ENCODE measurements at regions of chr1 and their contacts with region 1.

Region 1: DNA sequence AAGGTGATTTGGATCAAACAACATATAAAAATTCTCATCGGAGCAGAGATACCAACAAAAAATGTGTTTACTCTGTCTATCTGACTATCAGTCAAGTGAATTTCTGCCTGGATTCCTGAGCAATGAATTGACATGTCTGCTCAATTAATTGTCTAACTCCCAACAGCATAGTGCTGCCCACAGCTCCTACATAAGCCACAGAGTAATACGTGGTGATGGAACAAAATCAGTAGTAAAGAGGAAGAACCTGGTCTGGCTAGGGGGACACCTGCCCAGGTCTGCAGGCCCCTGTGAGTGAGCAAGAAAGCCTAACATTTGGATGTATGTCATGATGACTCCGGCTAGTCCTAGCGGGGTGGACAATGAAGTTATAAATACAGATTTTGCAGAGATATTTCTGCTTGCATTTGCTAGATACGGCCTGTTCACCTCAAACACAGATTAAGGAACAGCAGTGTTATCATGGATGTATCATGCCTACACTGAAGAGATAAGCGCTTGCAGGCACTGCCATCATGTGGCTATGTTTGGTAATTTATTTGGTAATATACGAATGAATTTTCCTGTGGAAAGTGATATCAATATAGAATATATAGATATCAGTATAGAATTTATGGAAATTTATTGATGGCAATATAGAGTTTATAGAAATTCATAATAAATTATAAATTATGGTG is 69.6 kb upstream of the LRRC8B start:
- DNase-seq: peak; percentile 67 to 73 (median 69)
- H3K4me3 ChIP-seq: no peak overlapping the region
- H3K4me3 Mint-ChIP-seq: no peak overlapping the region
- H3K27ac ChIP-seq: no peak overlapping the region
- H3K27ac Mint-ChIP-seq: peak overlapping the region in 2 of 7 donors; percentile 48 to 68
- H3K4me1 ChIP-seq: peaks cover 11% of the 10 kb centered on the region
- H3K4me1 Mint-ChIP-seq: peaks cover 9 to 14% (median 12%) of the 10 kb centered on the region in 4 donors
- H3K27me3 ChIP-seq: no peaks in the 10 kb centered on the region
- H3K27me3 Mint-ChIP-seq: peaks cover 1 to 2% of the 10 kb centered on the region in 2 donors

Region 2: GRCh38 chr1:88935522-88936222 is 519.3 kb before region 1 on chr1:
- CTCF ChIA-PET with region 1: interaction called, 6 read pairs
- POLR2A ChIA-PET with region 1: no interaction called
- intact Hi-C with region 1: loop called (anchors 1 kb)
- DNase-seq: peak in 4 of 5 donors; percentile 24 to 39 (median 34)
- H3K4me3 ChIP-seq: no peak overlapping the region
- H3K4me3 Mint-ChIP-seq: no peak overlapping the region
- H3K27ac ChIP-seq: no peak overlapping the region
- H3K27ac Mint-ChIP-seq: peak overlapping the region in 2 of 7 donors; percentile 2 to 27
- H3K4me1 ChIP-seq: no peaks in the 10 kb centered on the region
- H3K4me1 Mint-ChIP-seq: peaks cover 1 to 13% (median 5%) of the 10 kb centered on the region in 4 donors
- H3K27me3 ChIP-seq: no peaks in the 10 kb centered on the region
- H3K27me3 Mint-ChIP-seq: no peaks in the 10 kb centered on the region

Region 3: GRCh38 chr1:88973520-88974137 is 481.4 kb before region 1 on chr1:
- CTCF ChIA-PET with region 1: interaction called, 51 read pairs
- POLR2A ChIA-PET with region 1: no interaction called
- intact Hi-C with region 1: loop called (anchors 1 kb)
- DNase-seq: peak in 4 of 5 donors; percentile 25 to 39 (median 33)
- H3K4me3 ChIP-seq: no peak overlapping the region
- H3K4me3 Mint-ChIP-seq: peak overlapping the region in 1 of 8 donors; percentile 0
- H3K27ac ChIP-seq: no peak overlapping the region
- H3K27ac Mint-ChIP-seq: peak overlapping the region in 3 of 7 donors; percentile 2 to 74 (median 26)
- H3K4me1 ChIP-seq: peaks cover 8% of the 10 kb centered on the region
- H3K4me1 Mint-ChIP-seq: peaks cover 15 to 23% (median 15%) of the 10 kb centered on the region in 4 donors
- H3K27me3 ChIP-seq: no peaks in the 10 kb centered on the region
- H3K27me3 Mint-ChIP-seq: no peaks in the 10 kb centered on the region

Region 4: DNA sequence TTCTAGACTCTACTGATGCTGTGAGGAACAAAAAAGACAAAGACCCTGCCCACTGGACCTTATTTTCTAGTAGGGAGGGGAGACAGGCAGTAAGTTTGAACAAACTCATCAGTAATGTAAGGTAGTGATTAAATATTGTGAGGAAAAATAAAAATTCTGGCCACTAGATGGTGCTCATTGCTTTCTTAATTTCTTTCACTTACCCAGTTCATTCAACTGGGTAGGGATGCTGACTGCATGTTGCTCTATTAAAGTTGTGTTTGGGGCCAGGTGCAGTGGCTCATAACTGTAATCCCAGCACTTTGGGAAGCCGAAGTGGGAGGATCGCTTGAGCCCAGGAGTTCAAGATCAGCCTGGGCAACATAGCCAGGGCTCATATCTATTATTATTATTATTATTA is 456.3 kb before region 1 on chr1:
- CTCF ChIA-PET with region 1: interaction called, 70 read pairs
- POLR2A ChIA-PET with region 1: no interaction called
- intact Hi-C with region 1: loop called (anchors 1 kb)
- DNase-seq: peak; percentile 51 to 74 (median 71)
- H3K4me3 ChIP-seq: no peak overlapping the region
- H3K4me3 Mint-ChIP-seq: no peak overlapping the region
- H3K27ac ChIP-seq: no peak overlapping the region
- H3K27ac Mint-ChIP-seq: no peak overlapping the region
- H3K4me1 ChIP-seq: peaks cover 25% of the 10 kb centered on the region
- H3K4me1 Mint-ChIP-seq: peaks cover 20 to 40% (median 30%) of the 10 kb centered on the region in 4 donors
- H3K27me3 ChIP-seq: no peaks in the 10 kb centered on the region
- H3K27me3 Mint-ChIP-seq: no peaks in the 10 kb centered on the region

Region 5: DNA sequence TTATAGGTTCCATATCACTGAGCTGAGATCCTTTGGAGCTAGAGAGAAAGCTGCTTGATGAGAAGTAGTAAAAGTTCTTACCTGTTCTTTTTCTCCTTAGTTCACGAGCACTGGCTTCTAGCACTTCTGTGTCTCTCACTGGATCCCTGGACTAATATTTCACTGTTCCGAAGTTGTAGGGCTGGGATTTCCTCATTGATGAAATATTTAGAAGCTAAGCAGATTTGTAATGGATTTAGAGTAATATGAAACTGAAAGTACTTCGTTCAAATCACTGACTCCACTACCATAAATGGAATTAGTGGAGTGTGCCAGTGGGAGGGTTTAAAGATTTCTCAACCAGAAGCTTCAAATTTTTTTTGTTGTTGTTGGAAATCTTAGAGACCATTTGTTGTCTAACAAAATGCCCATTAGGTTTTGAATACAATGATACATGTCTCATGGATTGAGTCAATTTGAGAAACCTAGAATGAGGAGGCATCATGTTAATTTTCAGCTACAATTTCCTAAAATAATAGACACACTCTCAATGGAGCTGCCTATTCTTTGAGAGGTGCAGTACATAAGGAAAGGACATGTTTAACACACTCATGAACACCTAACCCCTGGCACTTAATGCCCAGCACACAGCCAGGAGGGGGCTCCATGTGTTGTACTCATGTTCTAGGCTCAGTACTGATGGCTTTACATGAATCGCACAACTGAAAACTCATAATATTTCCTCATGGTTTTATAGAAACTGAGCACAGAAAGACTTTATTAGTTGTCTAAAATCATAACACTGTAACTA is 389.7 kb before region 1 on chr1 and contains the start of gene GBP1:
- CTCF ChIA-PET with region 1: no interaction called
- POLR2A ChIA-PET with region 1: no interaction called
- intact Hi-C with region 1: loop called (anchors 1 kb)
- DNase-seq: peak; percentile 51 to 57 (median 53)
- H3K4me3 ChIP-seq: peak within 1 kb of the TSS; percentile 65 to 74
- H3K4me3 Mint-ChIP-seq: peak within 1 kb of the TSS; percentile 90 to 100 (median 98)
- H3K27ac ChIP-seq: peak within 1 kb of the TSS; percentile 85
- H3K27ac Mint-ChIP-seq: peak within 1 kb of the TSS; percentile 94 to 100 (median 96)
- H3K4me1 ChIP-seq: peaks cover 56% of the 10 kb centered on the region
- H3K4me1 Mint-ChIP-seq: peaks cover 37 to 70% (median 51%) of the 10 kb centered on the region in 4 donors
- H3K27me3 ChIP-seq: no peaks in the 10 kb centered on the region
- H3K27me3 Mint-ChIP-seq: no peaks in the 10 kb centered on the region
- total RNA-seq, gene GBP1: 74.1 to 74.2 TPM

Region 6: DNA sequence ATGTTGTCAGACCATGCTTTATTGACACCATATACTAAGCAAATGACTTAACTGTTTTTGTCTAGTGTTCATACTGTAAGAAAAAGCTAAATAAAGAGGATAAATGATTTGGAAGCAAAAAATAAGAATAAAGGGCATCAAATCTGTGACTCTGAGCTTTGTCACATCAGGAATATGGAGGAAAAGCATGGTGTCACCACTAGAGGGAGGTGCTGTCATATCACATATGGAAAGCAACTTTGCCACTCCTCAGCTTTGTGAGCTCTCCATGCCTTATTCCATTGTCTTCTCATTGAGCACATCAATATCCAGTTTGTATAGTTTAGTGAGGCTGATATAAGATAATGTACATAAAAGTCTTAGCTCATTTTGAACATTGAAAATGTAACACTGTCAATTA is 369.2 kb before region 1 on chr1:
- CTCF ChIA-PET with region 1: interaction called, 16 read pairs
- POLR2A ChIA-PET with region 1: no interaction called
- intact Hi-C with region 1: loop called (anchors 1 kb)
- DNase-seq: peak in 4 of 5 donors; percentile 45 to 66 (median 48)
- H3K4me3 ChIP-seq: no peak overlapping the region
- H3K4me3 Mint-ChIP-seq: no peak overlapping the region
- H3K27ac ChIP-seq: no peak overlapping the region
- H3K27ac Mint-ChIP-seq: no peak overlapping the region
- H3K4me1 ChIP-seq: no peaks in the 10 kb centered on the region
- H3K4me1 Mint-ChIP-seq: peaks cover 0 to 4% (median 2%) of the 10 kb centered on the region in 4 donors
- H3K27me3 ChIP-seq: no peaks in the 10 kb centered on the region
- H3K27me3 Mint-ChIP-seq: no peaks in the 10 kb centered on the region

Measured in CD4-positive, alpha-beta memory T cell (primary cell).